GM12878 (cell line): ENCODE measurements at regions of chr9 and their contacts with region 1.

Region 1: GRCh38 chr9:35732122-35732799 is at the starts of genes CREB3 and TLN1:
- DNase-seq: peak; percentile 91
- ATAC-seq: peak; percentile 86
- H3K4me3 ChIP-seq: peak within 1 kb of the TSS; percentile 93
- H3K27ac ChIP-seq: peak within 1 kb of the TSS; percentile 92
- H3K4me1 ChIP-seq: peaks cover 18% of the 10 kb centered on the region
- H3K27me3 ChIP-seq: no peaks in the 10 kb centered on the region
- CTCF ChIP-seq: peak in 2 of 3 experiments; percentile 20 to 49; a peak in 2 of 6 replicates
- EP300 ChIP-seq: peak in 1 of 2 experiments; percentile 12; a peak in 2 of 4 replicates
- POLR2A ChIP-seq: peak; percentile 84; the same call in 1 of the 2 replicates
- RAD21 ChIP-seq: no peak
- polyA plus RNA-seq, gene CREB3: 9.8 to 14.1 TPM
- polyA plus RNA-seq, gene TLN1: 11.6 to 13.2 TPM

Region 2: DNA sequence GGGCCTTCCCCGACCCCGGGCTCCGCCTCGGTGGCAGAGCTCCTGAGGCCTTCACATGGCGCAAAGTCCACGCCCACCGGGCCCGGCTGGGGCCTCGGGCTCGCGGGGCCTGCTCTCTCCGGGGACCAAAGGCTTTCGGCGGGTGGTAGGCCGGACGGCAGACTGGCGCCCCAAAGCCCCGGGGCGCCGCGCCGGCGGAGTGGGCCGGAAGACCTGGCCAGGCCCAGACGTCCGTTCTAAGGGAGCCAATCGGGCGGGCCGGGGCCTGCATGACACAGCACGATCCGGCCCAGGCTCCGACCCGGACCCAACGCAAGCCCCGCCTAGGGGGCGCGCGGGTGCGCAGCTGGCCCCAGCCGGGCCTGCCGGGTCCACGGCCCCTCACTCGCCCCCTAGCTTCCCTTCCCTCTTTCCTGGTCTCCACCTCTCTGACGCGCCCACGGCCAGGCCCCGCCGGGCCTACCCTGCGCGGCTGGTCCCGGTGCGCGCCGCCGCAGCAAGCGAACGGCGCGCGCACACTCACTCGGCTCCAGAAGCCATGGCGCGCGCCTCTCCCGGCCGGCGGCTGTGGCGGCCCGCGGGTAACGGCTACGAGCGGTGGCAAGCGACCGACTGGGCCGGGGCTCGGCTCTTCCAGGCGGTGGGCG is 660.3 kb before region 1 on chr9:
- CTCF ChIA-PET with region 1: no interaction called
- POLR2A ChIA-PET with region 1: no interaction called
- RAD21 ChIA-PET with region 1: no interaction called
- SMC1A ChIA-PET with region 1: no interaction called
- in situ Hi-C with region 1: no loop called
- intact Hi-C with region 1: loop called (anchors 10 kb)
- DNase-seq: no peak
- ATAC-seq: peak; percentile 86
- H3K4me3 ChIP-seq: peak overlapping the region; percentile 78
- H3K27ac ChIP-seq: peak overlapping the region; percentile 88
- H3K4me1 ChIP-seq: peaks cover 12% of the 10 kb centered on the region
- H3K27me3 ChIP-seq: no peaks in the 10 kb centered on the region
- CTCF ChIP-seq: peak in 2 of 3 experiments; percentile 29 to 33; a peak in 3 of 6 replicates
- EP300 ChIP-seq: no peak
- POLR2A ChIP-seq: no peak; the same call in 1 of the 2 replicates
- RAD21 ChIP-seq: no peak

Region 3: GRCh38 chr9:35603987-35604577 is 128.2 kb before region 1 on chr9:
- CTCF ChIA-PET with region 1: interaction called, 17 read pairs
- POLR2A ChIA-PET with region 1: interaction called, 6 read pairs
- RAD21 ChIA-PET with region 1: interaction called, 27 read pairs
- SMC1A ChIA-PET with region 1: interaction called, 6 read pairs
- in situ Hi-C with region 1: loop called (anchors 5 kb)
- intact Hi-C with region 1: loop called (anchors 1 kb)
- DNase-seq: peak; percentile 98
- ATAC-seq: peak; percentile 97
- H3K4me3 ChIP-seq: peak overlapping the region; percentile 77
- H3K27ac ChIP-seq: peak overlapping the region; percentile 73
- H3K4me1 ChIP-seq: peaks cover 8% of the 10 kb centered on the region
- H3K27me3 ChIP-seq: no peaks in the 10 kb centered on the region
- CTCF ChIP-seq: peak; percentile 81 to 98 (median 90)
- EP300 ChIP-seq: no peak
- POLR2A ChIP-seq: peak; percentile 81
- RAD21 ChIP-seq: peak; percentile 76

Region 4: DNA sequence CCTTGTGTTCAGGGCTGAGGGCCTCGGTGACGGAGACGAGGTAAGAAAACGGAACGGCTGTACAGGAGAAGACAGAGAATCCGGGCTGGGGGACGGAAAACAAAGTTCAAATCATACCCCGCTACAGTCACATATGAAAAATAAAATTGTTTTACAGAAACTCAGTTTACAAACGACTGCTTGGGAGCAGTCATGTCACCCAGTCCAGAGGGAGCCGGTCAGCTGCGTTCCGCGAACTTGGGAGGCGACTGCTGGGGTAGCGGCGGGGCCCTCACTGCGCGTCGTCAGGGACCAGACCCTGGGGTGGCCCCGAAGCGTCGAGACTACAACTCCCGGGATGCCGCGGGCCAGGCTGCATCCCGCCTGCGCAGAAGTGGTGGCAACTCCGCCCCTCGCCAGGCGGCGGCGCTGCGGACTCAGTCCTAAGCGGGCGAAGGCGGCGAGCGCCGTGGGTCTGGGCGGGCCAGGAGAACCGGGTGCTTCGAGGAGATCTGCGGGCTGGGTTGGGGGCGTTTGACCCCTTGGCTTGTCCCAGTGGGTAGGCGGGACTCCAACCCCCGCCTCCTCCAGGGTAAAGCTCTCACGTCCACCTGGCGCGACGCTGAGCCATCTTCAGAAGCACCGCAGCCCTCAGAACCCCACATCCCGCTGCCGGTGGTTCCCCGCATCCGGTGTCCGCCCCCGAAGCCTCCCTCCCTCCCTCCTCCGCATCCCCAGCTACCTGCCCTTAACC is 85.6 kb before region 1 on chr9:
- CTCF ChIA-PET with region 1: interaction called, 139 read pairs
- POLR2A ChIA-PET with region 1: interaction called, 127 read pairs
- RAD21 ChIA-PET with region 1: interaction called, 133 read pairs
- SMC1A ChIA-PET with region 1: interaction called, 96 read pairs
- in situ Hi-C with region 1: no loop called
- intact Hi-C with region 1: no loop called
- DNase-seq: no peak
- ATAC-seq: peak; percentile 90
- H3K4me3 ChIP-seq: peak overlapping the region; percentile 96
- H3K27ac ChIP-seq: peak overlapping the region; percentile 89
- H3K4me1 ChIP-seq: peaks cover 27% of the 10 kb centered on the region
- H3K27me3 ChIP-seq: no peaks in the 10 kb centered on the region
- CTCF ChIP-seq: peak; percentile 98
- EP300 ChIP-seq: no peak
- POLR2A ChIP-seq: peak; percentile 74
- RAD21 ChIP-seq: peak; percentile 79

Region 5: DNA sequence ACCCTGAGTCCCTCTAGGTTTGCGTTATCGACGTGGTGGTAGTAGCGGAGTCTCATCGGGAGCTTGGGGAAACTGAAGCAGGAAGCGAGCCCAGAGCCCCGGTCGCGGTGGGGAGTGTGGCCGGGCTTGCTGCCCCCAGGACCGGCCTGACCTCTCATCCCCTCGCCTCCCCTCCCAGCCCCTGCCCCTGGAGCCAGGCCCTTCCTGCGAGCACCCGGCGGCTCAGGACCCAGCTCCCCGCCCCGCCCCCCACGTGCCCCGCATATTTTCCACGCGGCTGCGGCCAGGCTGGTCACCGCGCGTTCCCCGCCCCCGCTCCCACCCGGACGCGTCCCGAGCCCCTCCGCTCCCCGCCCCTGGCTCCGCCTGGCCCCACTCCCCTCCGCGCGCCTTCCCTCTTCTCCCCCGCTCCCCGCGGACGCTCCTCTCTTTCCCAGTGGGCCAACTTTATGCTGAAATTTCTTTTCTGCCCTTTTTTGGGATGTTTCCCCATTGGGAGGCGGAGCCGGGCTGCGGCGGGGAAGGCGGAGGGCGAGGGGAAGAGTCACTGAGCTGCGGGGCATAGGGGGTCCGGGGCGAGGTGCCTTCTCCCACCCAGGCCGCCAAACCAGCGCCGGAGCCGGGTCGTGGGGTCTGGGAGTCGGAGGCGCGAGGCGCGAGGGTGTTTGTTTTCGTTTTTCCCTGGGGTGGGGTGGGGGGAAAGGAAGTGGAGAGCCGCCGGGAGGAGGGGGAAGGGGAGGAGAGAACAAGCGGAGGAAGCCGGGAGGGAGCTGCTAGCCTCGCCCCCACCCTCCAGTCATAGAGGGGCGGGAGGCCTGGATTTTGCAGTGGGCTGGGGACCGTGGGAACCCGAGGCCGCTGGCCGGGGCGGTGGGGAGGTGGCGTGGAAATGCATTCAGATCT is 41.6 kb before region 1 on chr9:
- CTCF ChIA-PET with region 1: interaction called, 105 read pairs
- POLR2A ChIA-PET with region 1: interaction called, 13 read pairs
- RAD21 ChIA-PET with region 1: interaction called, 25 read pairs
- SMC1A ChIA-PET with region 1: interaction called, 38 read pairs
- in situ Hi-C with region 1: no loop called
- intact Hi-C with region 1: no loop called
- DNase-seq: no peak
- ATAC-seq: peak; percentile 54
- H3K4me3 ChIP-seq: peak overlapping the region; percentile 87
- H3K27ac ChIP-seq: no peak overlapping the region
- H3K4me1 ChIP-seq: peaks cover 3% of the 10 kb centered on the region; the same call in 1 of the 2 replicates
- H3K27me3 ChIP-seq: no peaks in the 10 kb centered on the region
- CTCF ChIP-seq: no peak
- EP300 ChIP-seq: no peak
- POLR2A ChIP-seq: no peak; the same call in 1 of the 2 replicates
- RAD21 ChIP-seq: no peak

Region 6: DNA sequence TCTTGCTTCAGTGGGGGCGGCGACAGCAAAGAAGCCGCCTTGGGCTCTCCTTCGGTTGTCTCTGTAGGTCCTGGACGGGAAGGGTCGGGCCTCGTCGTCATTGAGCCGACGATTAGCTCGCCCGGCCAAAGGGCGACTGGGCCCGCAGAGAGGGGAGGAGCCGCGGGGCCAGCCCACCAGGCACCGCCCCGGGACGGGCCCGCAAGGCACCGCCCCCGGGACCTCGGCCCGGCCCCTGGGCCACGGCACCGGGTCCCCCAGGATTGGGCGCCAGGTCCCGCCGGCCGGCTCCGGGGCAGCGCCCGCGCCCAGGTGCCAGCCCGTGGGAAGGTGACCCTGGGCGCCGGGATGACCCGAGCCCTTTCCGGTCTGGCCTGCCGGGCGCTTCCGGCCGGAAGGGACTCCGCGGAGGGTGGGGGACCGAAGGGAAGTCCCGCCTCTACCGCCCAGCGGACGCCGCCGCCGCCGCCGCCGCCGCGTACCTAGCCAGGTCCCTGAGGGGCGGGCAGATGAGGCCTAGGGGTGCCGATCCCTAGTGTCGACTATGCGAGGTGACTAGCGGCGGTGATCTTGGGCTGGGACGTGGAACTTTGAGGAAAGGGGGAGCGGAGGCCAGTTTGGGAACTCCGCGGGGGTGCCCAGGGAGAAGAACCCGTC is 16.7 kb after region 1 on chr9 and contains the starts of genes GBA2 and RGP1:
- CTCF ChIA-PET with region 1: interaction called, 147 read pairs
- POLR2A ChIA-PET with region 1: interaction called, 70 read pairs
- RAD21 ChIA-PET with region 1: interaction called, 74 read pairs
- SMC1A ChIA-PET with region 1: interaction called, 39 read pairs
- in situ Hi-C with region 1: no loop called
- intact Hi-C with region 1: loop called (anchors 1 kb)
- DNase-seq: no peak
- ATAC-seq: peak; percentile 93
- H3K4me3 ChIP-seq: peak within 1 kb of the TSS; percentile 99
- H3K27ac ChIP-seq: peak within 1 kb of the TSS; percentile 75
- H3K4me1 ChIP-seq: peaks cover 4% of the 10 kb centered on the region
- H3K27me3 ChIP-seq: no peaks in the 10 kb centered on the region
- CTCF ChIP-seq: no peak
- EP300 ChIP-seq: no peak
- POLR2A ChIP-seq: peak; percentile 76
- RAD21 ChIP-seq: no peak
- polyA plus RNA-seq, gene GBA2: 15.3 TPM
- polyA plus RNA-seq, gene RGP1: 0.44 to 0.89 TPM

Region 7: DNA sequence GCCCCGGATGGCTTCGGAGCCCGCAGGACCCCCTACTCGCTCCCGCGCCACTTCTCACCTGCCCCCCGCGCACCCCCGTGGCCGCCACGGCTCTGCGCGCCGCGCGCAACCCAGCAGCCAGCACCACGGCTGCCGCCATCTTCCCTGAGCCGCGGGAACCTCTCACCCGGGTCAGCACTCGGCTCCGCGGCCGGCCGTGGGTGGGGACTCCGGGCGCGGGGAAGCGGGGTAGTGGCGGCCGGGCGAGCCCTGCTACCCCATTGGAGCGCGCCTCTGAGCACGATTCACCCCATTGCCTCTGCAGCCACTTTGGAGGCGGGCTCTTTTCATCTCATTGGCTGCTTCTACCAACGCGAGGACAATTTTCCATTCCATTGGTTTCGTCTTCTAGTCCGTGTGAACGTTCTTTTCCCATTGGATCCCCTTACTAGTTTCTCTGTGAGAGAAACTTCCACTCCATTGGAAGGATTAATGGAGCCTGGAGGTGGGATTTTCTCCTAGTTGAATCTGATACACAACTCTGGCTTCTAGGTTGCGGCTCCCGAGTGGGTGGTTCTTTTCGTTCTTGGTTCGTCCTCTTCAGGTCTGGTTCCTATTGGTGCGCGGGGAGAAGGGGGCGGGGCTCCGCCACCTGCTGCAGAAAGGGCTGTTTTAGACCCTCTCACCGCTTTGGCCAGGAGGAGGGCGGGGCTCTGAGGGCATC is 82.7 kb after region 1 on chr9 and contains the start of gene HINT2:
- CTCF ChIA-PET with region 1: interaction called, 42 read pairs
- POLR2A ChIA-PET with region 1: interaction called, 12 read pairs
- RAD21 ChIA-PET with region 1: interaction called, 6 read pairs
- SMC1A ChIA-PET with region 1: interaction called, 19 read pairs
- in situ Hi-C with region 1: no loop called
- intact Hi-C with region 1: loop called (anchors 1 kb)
- DNase-seq: peak; percentile 95
- ATAC-seq: peak; percentile 92
- H3K4me3 ChIP-seq: peak within 1 kb of the TSS; percentile 79
- H3K27ac ChIP-seq: peak within 1 kb of the TSS; percentile 75
- H3K4me1 ChIP-seq: peaks cover 33% of the 10 kb centered on the region
- H3K27me3 ChIP-seq: no peaks in the 10 kb centered on the region; a peak in 1 of 4 replicates
- CTCF ChIP-seq: no peak
- EP300 ChIP-seq: no peak
- POLR2A ChIP-seq: peak; percentile 95
- RAD21 ChIP-seq: no peak
- polyA plus RNA-seq, gene HINT2: 12.1 to 32.0 TPM

Region 8: GRCh38 chr9:35852876-35853865 is 120.9 kb after region 1 on chr9:
- CTCF ChIA-PET with region 1: no interaction called
- POLR2A ChIA-PET with region 1: no interaction called
- RAD21 ChIA-PET with region 1: no interaction called
- SMC1A ChIA-PET with region 1: no interaction called
- in situ Hi-C with region 1: no loop called
- intact Hi-C with region 1: no loop called
- DNase-seq: no peak
- ATAC-seq: no peak
- H3K4me3 ChIP-seq: no peak overlapping the region
- H3K27ac ChIP-seq: no peak overlapping the region
- H3K4me1 ChIP-seq: peaks cover 5% of the 10 kb centered on the region
- H3K27me3 ChIP-seq: no peaks in the 10 kb centered on the region
- CTCF ChIP-seq: no peak
- EP300 ChIP-seq: no peak
- POLR2A ChIP-seq: no peak
- RAD21 ChIP-seq: no peak

Region 9: DNA sequence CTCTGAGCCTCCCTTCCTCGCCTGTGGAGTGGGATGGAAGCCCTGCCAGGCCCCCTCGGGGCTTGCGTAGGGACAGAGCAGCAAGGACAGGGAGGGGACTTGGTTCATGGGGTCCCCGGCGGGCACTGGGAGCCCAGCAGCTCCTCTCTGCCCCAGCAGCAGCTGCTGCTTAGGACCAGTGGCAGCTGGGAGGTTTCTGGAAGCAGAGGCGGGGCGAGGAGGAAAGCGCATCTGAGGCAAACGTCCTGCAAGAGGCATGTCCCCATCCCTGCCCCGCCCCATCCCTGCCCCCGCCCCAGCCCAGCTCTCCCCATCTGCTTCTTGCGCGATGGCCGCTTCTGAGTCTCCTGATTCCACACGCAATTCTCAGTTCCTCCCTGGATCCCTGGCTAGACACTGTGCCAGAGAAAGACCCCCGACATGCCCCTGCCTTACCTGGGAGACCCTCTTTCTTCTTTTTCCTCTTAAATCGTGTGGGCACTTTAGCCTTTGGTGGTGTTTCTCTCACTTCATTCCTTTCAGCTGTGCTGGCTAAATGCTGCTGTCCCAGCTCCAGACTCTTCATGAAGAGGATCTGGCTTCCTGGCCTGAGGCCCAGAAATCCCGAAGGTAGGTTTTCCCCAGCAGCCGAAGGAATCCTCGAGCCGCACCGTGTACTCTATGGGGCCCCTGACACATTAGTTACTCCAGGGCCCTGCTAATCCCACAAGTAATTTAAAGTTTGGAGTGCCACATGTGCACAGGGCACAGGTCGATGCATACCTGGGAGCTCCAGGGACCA is 230.1 kb after region 1 on chr9:
- CTCF ChIA-PET with region 1: no interaction called
- POLR2A ChIA-PET with region 1: no interaction called
- RAD21 ChIA-PET with region 1: no interaction called
- SMC1A ChIA-PET with region 1: no interaction called
- in situ Hi-C with region 1: no loop called
- intact Hi-C with region 1: no loop called
- DNase-seq: no peak
- ATAC-seq: no peak
- H3K4me3 ChIP-seq: no peak overlapping the region
- H3K27ac ChIP-seq: no peak overlapping the region
- H3K4me1 ChIP-seq: no peaks in the 10 kb centered on the region
- H3K27me3 ChIP-seq: no peaks in the 10 kb centered on the region; a peak in 2 of 4 replicates
- CTCF ChIP-seq: no peak
- EP300 ChIP-seq: no peak
- POLR2A ChIP-seq: no peak
- RAD21 ChIP-seq: no peak